Heart left ventricle (tissue), 16 donors: ENCODE measurements at regions of chr9 and their contacts with region 1.

Region 1: GRCh38 chr9:76846297-76846696 is 59.6 kb downstream of the PRUNE2 start:
- DNase-seq: no peak
- ATAC-seq: no peak
- H3K4me3 ChIP-seq: no peak overlapping the region
- H3K27ac ChIP-seq: peak overlapping the region in 1 of 12 donors; percentile 78
- H3K4me1 ChIP-seq: no peaks in the 10 kb centered on the region
- H3K27me3 ChIP-seq: no peaks in the 10 kb centered on the region
- CTCF ChIP-seq: no peak
- POLR2A ChIP-seq: no peak

Region 2: DNA sequence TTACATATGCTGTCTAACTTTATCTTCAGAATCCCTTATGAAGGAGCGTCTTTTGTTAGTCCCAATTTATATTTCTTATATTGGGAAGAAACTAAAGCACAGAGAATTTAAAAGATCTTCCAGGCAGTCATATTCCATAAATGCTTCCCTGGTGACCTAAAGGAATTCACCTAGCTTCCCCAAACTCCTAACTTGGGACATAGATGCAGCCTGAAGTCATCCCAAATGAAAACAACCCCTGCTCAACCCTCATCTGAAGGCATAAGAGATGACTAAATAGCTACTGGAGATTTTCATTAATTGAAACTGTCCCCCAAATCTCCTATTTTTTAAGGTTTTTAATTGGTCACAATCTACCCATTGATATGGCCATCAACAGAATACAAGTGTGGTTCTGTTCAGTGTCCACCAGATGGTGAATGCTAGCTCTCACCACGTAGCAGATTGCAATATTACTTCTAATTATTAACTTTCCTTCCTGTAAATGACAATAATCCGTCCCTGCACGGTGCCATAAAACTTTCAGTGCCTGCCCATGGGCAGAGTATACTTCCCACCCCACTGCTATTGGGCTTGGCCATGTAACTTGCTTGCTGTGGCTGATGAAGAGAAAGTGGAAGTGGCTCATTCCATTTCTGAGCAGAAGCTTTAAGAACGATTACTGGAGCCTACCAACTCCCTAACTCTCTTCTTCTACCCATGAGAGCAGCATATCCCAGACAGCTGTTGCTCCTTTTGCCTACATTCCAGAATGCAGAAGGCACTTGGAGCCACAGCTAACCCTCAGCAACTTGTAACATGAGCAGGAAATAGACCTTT is 40.9 kb after region 1 on chr9:
- intact Hi-C with region 1: loop called in 1 of 10 experiments (anchors 5 kb)
- DNase-seq: no peak
- ATAC-seq: no peak
- H3K4me3 ChIP-seq: no peak overlapping the region
- H3K27ac ChIP-seq: peak overlapping the region in 1 of 12 donors; percentile 77
- H3K4me1 ChIP-seq: no peaks in the 10 kb centered on the region
- H3K27me3 ChIP-seq: no peaks in the 10 kb centered on the region
- CTCF ChIP-seq: no peak
- POLR2A ChIP-seq: no peak

Region 3: DNA sequence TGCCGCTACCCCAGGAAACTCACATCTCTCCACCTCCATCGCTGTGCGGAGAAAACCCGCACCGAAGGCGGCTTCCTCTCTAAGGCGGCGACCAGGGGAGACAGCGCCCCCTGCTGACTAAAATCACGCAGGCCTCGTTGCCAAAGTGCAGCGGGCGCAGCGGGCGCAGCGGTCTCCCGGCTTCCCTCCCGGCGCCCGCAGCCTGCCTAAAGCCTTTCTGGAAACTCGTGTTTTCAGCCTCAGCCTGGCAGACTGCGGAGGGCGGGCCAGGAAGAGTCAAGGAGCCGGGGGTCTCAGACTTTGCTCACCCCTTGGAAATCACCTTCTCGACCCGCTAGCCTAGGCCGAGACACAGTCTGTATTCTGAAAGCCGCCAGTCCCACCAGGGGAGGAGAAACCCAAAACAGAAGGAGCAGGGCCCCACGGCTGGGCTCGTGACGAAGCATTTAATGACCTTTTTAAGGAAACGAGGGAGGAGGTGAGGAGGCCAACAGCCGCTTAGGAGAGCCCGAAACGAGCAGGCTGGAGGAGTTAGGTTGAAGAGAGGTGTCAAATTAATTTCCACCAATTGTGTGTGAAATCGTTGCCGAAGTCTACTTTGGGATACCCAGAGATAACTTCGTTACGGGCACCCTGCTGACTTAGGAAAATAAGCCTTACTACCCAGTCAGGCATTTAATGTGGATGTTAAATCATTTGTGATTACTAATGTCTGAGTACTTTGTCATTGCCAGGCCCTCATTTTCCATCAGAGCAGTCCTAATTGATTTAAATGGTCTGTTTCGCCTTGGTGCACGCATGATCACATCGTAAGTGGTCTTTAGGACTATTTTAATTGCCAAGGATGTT is 165.9 kb after region 1 on chr9:
- intact Hi-C with region 1: no loop called
- DNase-seq: peak in 3 of 5 donors; percentile 45 to 75 (median 53)
- ATAC-seq: peak in 3 of 4 donors; percentile 42 to 66 (median 55)
- H3K4me3 ChIP-seq: peak overlapping the region in 4 of 12 donors; percentile 1 to 21 (median 8)
- H3K27ac ChIP-seq: no peak overlapping the region
- H3K4me1 ChIP-seq: peaks cover 0 to 38% (median 13%) of the 10 kb centered on the region in 12 donors
- H3K27me3 ChIP-seq: peaks cover 63 to 100% (median 86%) of the 10 kb centered on the region in 9 donors
- CTCF ChIP-seq: peak; percentile 56 to 85 (median 74)
- POLR2A ChIP-seq: no peak